Mucosa of descending colon (tissue), 3 donors: ENCODE measurements at regions of chr1 and their contacts with region 1.

Region 1: DNA sequence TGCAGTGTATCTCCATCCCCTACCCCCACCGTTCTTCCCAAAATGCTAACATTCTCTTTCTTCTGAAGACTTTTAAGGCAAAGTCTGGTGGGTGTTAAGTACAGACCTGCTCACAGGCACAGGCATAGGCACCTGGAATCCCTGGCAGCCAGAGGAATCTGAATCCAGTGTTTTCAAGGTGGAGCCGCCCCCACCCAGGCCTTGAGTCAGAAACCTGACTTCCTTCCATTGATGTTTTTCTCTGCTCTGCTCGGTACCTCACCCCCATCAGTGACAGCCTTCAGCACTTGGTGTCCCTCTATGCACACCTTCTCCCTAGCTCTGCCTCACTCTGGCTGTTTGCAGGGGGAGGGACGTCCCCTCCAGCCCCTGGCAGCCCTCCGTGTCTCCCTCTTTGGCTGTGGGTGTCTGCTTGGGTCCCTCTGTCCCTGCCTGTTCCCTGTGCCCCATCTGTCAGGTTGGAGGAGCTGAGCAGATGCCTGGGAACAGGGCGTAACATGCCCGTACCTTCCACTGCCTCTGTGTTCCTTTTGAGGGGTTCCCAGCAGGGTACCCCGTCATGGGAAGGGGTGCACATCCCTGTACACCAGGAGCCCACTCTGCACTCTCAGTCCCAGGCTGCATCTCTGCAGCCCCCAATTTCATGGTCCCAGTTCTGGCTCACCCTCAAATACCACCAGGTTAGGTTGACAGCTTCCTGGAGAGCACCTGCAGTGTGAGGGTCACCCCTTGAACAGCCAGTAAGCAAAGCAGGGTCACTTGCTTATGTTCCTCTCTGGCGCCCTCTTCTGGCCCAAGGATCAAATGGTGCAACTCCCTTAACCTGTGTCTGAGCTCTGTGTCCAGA is 6.7 kb downstream of the NCDN start:
- DNase-seq: peak in 2 of 3 donors; percentile 76 to 91
- ATAC-seq: peak; percentile 77
- H3K4me3 ChIP-seq: no peak overlapping the region
- H3K4me1 ChIP-seq: no peaks in the 10 kb centered on the region
- CTCF ChIP-seq: peak; percentile 63

Region 2: DNA sequence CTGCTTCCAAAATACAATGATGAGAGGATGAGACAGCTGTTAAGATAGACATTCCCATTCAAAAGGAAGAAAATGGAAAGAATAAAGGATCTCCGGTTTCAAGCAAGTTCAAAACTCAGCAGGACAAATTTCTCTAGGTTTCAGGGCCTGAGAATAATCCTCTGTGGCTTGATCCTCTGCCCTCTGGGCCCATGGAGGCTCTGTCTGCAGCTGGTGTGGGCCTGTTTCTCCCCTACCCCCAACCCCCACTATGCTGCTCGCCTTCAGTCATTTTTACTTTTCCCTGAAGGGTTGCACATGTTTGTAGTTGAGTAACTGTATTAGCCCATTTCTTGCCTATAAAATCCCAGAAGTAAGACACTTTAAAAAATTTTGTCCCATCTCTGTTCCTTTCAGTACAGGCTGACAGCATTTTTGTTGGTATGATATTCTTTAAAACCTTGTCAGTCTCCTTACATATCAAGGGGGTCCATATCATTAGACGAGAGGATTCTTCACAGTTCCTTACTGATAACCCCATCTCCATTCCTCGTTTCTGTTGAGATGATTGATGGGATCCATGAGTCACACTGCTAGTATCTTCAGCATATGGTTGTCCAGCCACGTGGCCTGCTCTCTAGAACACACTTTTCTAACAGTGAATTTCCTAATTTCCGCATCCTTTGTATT is 285.2 kb before region 1 on chr1:
- intact Hi-C with region 1: no loop called
- DNase-seq: no peak
- ATAC-seq: no peak
- H3K4me3 ChIP-seq: no peak overlapping the region
- H3K4me1 ChIP-seq: no peaks in the 10 kb centered on the region
- CTCF ChIP-seq: no peak

Region 3: DNA sequence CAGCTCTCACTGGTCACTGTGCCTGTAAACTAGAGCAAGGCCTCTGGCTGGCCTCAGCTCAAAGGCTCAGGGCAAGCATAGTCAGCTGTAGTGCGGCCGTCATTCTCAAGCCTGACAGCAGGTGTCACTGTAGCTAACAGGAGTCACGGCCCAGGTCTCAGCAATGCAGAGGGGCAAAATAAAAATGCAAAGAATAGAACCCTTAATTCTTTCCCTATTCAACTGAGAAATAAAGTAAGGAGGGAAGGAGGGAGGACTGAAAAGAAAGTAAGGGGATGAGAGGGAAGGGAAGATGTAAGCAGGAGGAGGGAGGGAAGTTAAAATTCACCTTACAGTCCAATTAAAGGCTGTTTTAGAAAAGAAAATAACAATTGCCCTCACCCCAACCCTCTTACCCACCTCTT is 113.1 kb before region 1 on chr1:
- intact Hi-C with region 1: loop called in 1 of 2 experiments (anchors 5 kb)
- DNase-seq: peak; percentile 75 to 88 (median 83)
- ATAC-seq: peak; percentile 91
- H3K4me3 ChIP-seq: no peak overlapping the region
- H3K4me1 ChIP-seq: no peaks in the 10 kb centered on the region
- CTCF ChIP-seq: peak; percentile 69

Region 4: GRCh38 chr1:35488336-35488735 is 75.9 kb before region 1 on chr1:
- intact Hi-C with region 1: no loop called
- DNase-seq: no peak
- ATAC-seq: no peak
- H3K4me3 ChIP-seq: no peak overlapping the region
- H3K4me1 ChIP-seq: no peaks in the 10 kb centered on the region
- CTCF ChIP-seq: no peak

Region 5: DNA sequence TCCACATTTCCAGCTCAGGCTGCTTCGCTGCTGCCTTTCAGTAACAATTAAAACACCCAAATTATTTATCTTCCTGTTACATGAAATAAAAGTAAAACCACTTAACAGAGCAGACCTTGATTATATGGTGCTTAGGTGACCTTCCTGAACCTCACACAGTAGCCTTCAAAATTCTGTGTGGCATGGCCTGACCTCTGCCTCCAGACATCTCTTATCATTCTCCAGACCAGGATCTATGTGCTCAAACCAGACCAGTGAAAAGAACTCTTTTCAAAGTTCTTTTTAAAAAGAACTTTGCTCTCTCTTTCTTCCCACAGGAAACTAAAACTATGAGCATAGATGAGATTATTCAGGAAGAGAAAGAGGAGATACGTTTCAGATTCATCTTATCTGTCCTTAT is 44.8 kb before region 1 on chr1:
- intact Hi-C with region 1: no loop called
- DNase-seq: no peak
- ATAC-seq: no peak
- H3K4me3 ChIP-seq: no peak overlapping the region
- H3K4me1 ChIP-seq: no peaks in the 10 kb centered on the region
- CTCF ChIP-seq: no peak

Region 6: GRCh38 chr1:35715568-35716002 is 151.3 kb after region 1 on chr1:
- intact Hi-C with region 1: loop called in 1 of 2 experiments (anchors 5 kb)
- DNase-seq: peak; percentile 75 to 84 (median 83)
- ATAC-seq: peak; percentile 85
- H3K4me3 ChIP-seq: no peak overlapping the region
- H3K4me1 ChIP-seq: peaks cover 5% of the 10 kb centered on the region
- CTCF ChIP-seq: peak; percentile 69

Region 7: GRCh38 chr1:35769759-35770446 is 205.6 kb after region 1 on chr1 and contains the start of gene CLSPN:
- intact Hi-C with region 1: loop called in 1 of 2 experiments (anchors 10 kb)
- DNase-seq: peak; percentile 95
- ATAC-seq: peak; percentile 98
- H3K4me3 ChIP-seq: peak within 1 kb of the TSS; percentile 56
- H3K4me1 ChIP-seq: peaks cover 3% of the 10 kb centered on the region
- CTCF ChIP-seq: no peak
- total RNA-seq, gene CLSPN: 1.4 to 8.6 (median 2.3) TPM